Motor neuron (in vitro differentiated cells): ENCODE measurements at regions of chr5 and their contacts with region 1.

Region 1: DNA sequence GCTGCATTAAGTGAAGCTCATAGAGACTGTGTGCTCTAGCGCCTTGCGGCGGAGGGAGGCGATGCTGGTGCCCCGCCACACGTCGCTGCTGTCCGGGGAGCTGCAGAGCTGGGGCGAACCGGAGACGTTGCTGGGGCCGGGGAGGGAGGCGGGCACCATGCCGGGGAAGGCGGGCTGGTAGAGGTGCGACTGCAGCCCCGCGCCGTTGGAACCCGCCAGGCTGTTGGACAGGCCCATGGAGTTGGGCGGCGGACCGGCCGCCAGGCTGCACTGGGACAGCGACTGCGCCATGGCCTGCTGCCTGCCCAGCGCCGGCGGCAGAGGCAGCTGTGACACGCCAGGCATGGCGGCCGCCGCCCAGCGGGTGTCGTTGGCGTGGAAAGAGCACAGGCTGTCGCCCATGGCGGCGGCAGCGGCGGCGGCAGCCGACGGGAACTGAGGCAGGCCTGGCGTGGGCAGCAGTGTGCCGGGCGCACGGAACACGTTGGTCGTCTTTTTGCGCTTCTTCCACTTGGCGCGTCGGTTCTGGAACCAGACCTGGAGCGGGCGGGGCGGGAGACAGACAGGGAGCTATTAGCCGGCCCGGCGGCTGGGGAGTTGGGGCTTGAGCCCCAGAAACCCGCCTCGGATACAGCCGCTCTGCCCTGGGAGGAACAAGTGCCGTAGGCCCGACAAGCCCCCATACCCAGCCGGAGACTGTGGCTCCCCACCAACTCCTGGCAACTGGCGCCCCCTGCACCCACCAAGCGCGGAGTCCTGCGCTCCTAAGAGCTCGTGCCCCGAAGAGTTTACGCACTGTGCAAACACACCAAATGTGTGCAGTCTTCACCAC is 8.0 kb downstream of the OTP start:
- ATAC-seq: peak; percentile 89 to 97 (median 92)
- H3K4me3 ChIP-seq: peak overlapping the region; percentile 10 to 40 (median 37)
- H3K27ac ChIP-seq: no peak overlapping the region
- H3K4me1 ChIP-seq: peaks cover 0 to 6% of the 10 kb centered on the region in 2 donors

Region 2: GRCh38 chr5:76733049-76733417 is 897.4 kb before region 1 on chr5:
- in situ Hi-C with region 1: no loop called
- ATAC-seq: no peak
- H3K4me3 ChIP-seq: no peak overlapping the region
- H3K27ac ChIP-seq: no peak overlapping the region
- H3K4me1 ChIP-seq: no peaks in the 10 kb centered on the region

Region 3: DNA sequence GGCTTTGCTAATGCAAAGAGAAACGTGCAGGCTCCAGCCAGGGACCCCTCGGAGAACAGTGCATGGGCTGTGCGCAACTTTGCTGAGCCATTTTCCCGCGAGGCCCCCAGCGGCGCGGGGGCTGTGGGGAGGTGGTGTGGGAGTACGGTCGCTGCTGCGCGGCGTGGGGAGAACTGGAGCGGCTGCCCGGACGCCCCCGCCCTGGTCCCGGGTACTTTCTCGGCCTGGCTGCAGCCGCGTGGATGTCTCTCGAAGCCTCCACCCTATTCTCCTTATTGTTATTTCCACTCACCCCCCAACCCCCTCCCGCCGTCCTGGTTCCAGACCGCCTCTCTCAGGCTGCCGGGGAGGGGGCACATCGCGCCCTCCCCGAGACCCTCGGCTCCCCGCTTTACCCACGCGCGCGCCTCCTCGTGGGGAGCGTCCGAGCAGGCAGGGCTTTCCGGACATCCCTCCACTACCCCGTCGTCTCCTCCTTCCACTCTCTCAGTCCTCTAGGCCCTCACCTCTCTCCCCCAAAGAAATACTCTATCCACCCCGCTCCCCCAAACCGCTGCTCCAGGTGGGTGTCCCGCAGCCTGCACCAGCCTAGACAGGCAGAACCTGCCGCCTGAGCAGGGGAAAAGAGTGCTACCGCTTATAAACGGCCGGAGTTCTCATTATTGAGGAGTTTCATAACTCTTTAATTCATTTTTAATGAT is 214.3 kb after region 1 on chr5:
- in situ Hi-C with region 1: loop called in 1 of 9 experiments (anchors 25 kb)
- ATAC-seq: peak in 4 of 8 experiments; percentile 1 to 62 (median 45)
- H3K4me3 ChIP-seq: peak overlapping the region in 3 of 5 donors; percentile 10 to 20 (median 16)
- H3K27ac ChIP-seq: no peak overlapping the region
- H3K4me1 ChIP-seq: peaks cover 25 to 28% of the 10 kb centered on the region in 2 donors

Region 4: DNA sequence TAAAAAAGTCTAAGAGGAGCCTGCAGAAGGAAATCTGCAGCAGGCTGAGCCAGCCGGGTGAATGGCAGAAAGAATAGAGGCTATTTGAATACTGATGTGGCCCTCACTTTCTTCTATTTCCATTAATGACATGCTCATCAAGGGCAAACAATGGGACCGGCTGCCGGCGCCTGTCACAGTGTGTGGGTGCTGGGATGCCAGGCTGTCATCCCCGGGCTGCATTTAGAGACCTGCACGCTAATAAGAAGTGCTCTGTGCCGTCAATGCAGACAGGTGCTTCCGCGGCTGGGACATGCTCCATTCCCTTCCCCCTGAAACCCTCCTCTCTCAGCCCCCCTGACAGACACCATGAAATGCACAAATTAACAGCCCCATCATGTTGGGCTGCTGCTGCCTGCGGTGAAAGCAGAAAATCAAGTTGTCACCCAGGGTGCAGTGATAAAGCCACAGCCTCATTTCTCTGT is 363.4 kb after region 1 on chr5:
- in situ Hi-C with region 1: loop called in 1 of 9 experiments (anchors 25 kb)
- ATAC-seq: peak in 5 of 8 experiments; percentile 72 to 84 (median 79)
- H3K4me3 ChIP-seq: peak overlapping the region in 1 of 5 donors; percentile 10
- H3K27ac ChIP-seq: no peak overlapping the region
- H3K4me1 ChIP-seq: peaks cover 50% of the 10 kb centered on the region in 2 donors